Activated CD4-positive, alpha-beta memory T cell treated with anti-CD3 and anti-CD28 coated beads for 36 hours (primary cell): ENCODE measurements at regions of chr1 and their contacts with region 1.

Region 1: DNA sequence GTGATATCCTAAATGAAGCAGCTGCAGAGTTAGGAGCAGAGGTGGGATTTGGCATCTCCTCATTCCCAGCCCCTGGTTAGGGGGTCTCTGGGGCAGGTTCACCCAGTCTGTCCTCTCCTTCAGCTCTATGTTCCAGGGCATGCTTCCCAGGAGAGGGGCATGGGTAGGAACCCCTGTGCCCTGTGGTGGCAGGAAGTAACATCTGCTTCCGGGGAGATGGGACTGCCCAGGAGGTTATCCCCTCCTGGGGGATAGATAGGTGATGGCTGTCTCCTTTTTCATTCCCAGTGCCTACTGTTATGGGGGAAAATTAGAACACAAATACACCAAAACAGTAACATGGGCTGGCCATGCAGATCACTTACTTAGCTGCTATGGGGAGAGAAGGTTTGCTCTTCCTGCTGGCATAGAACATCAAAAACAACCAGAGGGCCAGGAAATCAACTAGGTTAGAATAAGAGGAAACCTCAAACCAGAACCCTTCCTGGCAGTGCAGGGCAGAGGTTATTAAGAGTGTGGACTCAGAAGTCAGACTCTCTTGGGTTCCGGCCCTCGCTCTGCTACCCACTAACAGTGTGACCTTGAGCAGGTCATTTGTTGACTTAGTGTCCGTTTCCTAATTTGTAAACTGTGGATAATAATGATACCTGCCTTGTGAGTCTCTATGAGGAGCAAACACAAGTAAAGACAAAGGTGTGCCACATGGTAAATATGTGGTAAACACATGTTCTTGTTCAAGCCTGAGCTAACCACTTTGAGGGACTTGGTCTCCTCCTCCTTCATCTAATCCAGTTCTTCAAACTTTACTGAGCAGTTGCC is 157.8 kb upstream of the JUN start:
- DNase-seq: peak; percentile 35
- H3K4me3 Mint-ChIP-seq: no peak overlapping the region
- H3K27ac Mint-ChIP-seq: peak overlapping the region; percentile 55
- H3K4me1 Mint-ChIP-seq: peaks cover 56% of the 10 kb centered on the region
- H3K27me3 Mint-ChIP-seq: no peaks in the 10 kb centered on the region

Region 2: DNA sequence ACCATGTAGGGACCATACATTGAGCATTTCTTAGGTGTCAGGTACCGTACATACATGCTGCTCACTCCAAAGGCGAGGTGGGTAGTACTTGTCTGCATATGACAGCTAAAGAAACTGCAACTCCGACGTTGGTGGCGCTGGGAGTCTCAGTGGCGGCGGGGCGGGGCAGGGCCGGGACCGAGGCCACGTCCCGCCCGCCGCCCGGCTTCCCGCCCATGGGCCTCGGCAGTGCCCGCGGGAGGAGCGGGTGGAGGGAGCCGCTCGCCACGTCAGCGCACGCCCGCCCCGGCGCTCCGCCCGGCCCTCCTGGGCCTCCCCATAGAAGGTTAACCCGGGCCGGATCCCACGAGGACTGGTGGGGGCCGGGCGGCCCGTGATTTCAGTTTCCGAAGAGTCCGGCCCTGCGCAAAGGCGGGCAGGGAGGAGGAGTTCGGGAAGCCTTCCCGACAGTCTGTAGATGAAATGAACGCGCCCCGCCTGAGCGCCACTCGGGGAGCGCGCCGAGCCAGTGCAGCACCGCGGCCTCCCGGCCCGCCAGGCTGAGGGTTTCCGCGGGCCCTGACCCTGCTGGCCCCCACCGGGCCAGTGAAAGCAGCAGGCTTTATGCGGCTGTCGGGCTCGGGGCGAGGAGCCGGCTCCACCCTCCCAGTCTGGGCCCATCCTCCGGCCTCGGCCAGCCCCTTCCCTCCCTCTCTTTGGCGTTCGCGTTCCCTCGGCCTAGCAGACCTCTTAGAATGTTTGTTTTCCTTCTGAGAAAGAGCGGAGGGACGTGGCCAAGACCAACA is 38.0 kb before region 1 on chr1:
- CTCF ChIA-PET with region 1: no interaction called
- POLR2A ChIA-PET with region 1: no interaction called
- intact Hi-C with region 1: no loop called
- DNase-seq: peak; percentile 91
- H3K4me3 Mint-ChIP-seq: peak overlapping the region; percentile 69
- H3K27ac Mint-ChIP-seq: peak overlapping the region; percentile 75
- H3K4me1 Mint-ChIP-seq: peaks cover 10% of the 10 kb centered on the region
- H3K27me3 Mint-ChIP-seq: no peaks in the 10 kb centered on the region

Region 3: GRCh38 chr1:58922302-58923089 is 19.2 kb before region 1 on chr1:
- CTCF ChIA-PET with region 1: interaction called, 3 read pairs
- POLR2A ChIA-PET with region 1: no interaction called
- intact Hi-C with region 1: loop called (anchors 2 kb)
- DNase-seq: peak; percentile 76
- H3K4me3 Mint-ChIP-seq: no peak overlapping the region
- H3K27ac Mint-ChIP-seq: peak overlapping the region; percentile 31
- H3K4me1 Mint-ChIP-seq: peaks cover 18% of the 10 kb centered on the region
- H3K27me3 Mint-ChIP-seq: no peaks in the 10 kb centered on the region

Region 4: DNA sequence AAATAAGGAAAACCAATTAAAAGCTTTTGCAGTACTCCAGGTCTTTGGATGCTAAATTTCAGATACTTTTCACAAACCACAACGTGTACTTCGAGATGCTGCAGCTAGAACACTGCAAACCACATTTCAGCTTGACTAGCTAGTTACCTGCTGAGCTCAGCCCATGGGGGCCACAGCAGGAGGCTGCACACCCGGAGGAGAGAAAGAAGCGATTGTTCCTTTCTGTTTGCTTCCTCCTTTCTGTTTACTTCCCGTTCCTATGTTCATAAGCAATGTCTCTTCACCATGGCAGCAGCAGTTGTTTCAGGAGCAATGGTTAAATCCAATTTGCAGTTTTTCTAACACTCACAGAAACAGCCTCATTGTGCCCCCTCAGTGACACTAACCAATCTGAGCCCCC is 129.6 kb after region 1 on chr1:
- CTCF ChIA-PET with region 1: no interaction called
- POLR2A ChIA-PET with region 1: no interaction called
- intact Hi-C with region 1: loop called (anchors 5 kb)
- DNase-seq: no peak
- H3K4me3 Mint-ChIP-seq: peak overlapping the region; percentile 47
- H3K27ac Mint-ChIP-seq: peak overlapping the region; percentile 77
- H3K4me1 Mint-ChIP-seq: peaks cover 19% of the 10 kb centered on the region
- H3K27me3 Mint-ChIP-seq: no peaks in the 10 kb centered on the region

Region 5: GRCh38 chr1:59477286-59477685 is 535.6 kb after region 1 on chr1:
- CTCF ChIA-PET with region 1: no interaction called
- POLR2A ChIA-PET with region 1: no interaction called
- intact Hi-C with region 1: no loop called
- DNase-seq: peak; percentile 80
- H3K4me3 Mint-ChIP-seq: no peak overlapping the region
- H3K27ac Mint-ChIP-seq: peak overlapping the region; percentile 43
- H3K4me1 Mint-ChIP-seq: peaks cover 15% of the 10 kb centered on the region
- H3K27me3 Mint-ChIP-seq: no peaks in the 10 kb centered on the region